Activated CD4-positive, alpha-beta T cell treated with anti-CD3 and anti-CD28 coated beads, Interleukin-2, amount 10 ng/mL, durations not matched to agents 7 days and 5 days (primary cell): ENCODE measurements at regions of chr2 and their contacts with region 1.

Region 1: GRCh38 chr2:191228861-191229260 is 16.3 kb upstream of the MYO1B start:
- DNase-seq: no peak
- H3K4me3 Mint-ChIP-seq: no peak overlapping the region
- H3K27ac Mint-ChIP-seq: no peak overlapping the region
- H3K4me1 Mint-ChIP-seq: no peaks in the 10 kb centered on the region
- H3K27me3 Mint-ChIP-seq: no peaks in the 10 kb centered on the region

Region 2: DNA sequence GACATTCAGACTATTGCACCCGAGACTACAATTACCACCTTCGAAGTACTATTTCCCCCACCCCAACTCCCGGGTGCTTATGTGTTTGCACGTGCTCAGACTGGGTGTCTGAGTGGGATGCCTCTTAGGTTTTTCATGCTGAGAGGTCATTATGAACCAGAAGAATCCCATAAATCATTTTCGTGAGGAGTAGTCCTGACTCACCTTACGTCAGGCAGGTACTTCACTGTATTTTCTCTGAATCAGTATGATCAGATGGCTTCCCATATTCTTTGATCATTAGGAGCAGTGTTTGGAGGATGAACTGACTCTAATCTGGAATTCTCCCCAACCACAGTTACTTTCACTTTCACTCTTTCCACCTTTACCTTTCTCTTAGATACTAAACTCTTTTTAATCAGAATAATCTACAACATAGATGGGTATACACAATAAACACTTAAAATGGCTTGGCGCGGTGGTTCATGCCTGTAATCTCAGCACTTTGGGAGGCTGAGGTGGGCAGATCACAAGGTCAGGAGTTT is 39.7 kb before region 1 on chr2:
- CTCF ChIA-PET with region 1: no interaction called
- POLR2A ChIA-PET with region 1: no interaction called
- DNase-seq: no peak
- H3K4me3 Mint-ChIP-seq: no peak overlapping the region
- H3K27ac Mint-ChIP-seq: peak overlapping the region; percentile 37
- H3K4me1 Mint-ChIP-seq: peaks cover 39% of the 10 kb centered on the region
- H3K27me3 Mint-ChIP-seq: no peaks in the 10 kb centered on the region

Region 3: GRCh38 chr2:191206613-191207481 is 22.0 kb before region 1 on chr2:
- CTCF ChIA-PET with region 1: no interaction called
- POLR2A ChIA-PET with region 1: no interaction called
- DNase-seq: peak; percentile 31
- H3K4me3 Mint-ChIP-seq: no peak overlapping the region
- H3K27ac Mint-ChIP-seq: peak overlapping the region; percentile 31
- H3K4me1 Mint-ChIP-seq: peaks cover 39% of the 10 kb centered on the region
- H3K27me3 Mint-ChIP-seq: no peaks in the 10 kb centered on the region

Region 4: DNA sequence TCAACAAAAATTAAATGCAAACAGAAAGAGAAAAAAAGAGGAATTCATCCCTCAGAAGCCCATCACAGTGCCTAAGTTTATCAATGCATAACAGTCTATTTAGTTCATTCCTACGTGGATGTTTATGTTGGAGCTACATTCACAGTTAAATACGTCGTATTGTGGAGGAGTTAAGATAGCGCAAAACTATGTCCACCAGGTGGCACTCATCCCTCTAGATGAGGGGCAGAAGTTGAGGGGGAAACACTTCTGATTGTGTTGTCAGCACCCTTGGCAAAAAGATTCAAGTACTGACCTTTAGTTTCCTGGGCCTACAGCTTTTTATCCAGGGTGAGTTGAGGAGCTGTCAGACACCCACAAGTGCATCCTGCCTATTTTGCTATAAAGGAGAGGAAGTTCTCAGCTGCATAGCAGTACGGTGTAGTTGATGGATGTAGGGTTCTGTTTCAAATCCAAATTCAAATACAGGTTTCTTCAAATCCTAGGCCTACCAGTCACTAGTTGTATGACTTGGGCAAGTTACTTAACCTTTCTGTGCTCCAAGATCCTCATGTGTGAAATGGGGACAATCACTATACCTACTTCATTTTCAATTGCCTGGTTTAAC is 10.5 kb before region 1 on chr2:
- CTCF ChIA-PET with region 1: interaction called, 10 read pairs
- POLR2A ChIA-PET with region 1: no interaction called
- DNase-seq: peak; percentile 27
- H3K4me3 Mint-ChIP-seq: no peak overlapping the region
- H3K27ac Mint-ChIP-seq: no peak overlapping the region
- H3K4me1 Mint-ChIP-seq: peaks cover 17% of the 10 kb centered on the region
- H3K27me3 Mint-ChIP-seq: no peaks in the 10 kb centered on the region